PC-3 (cell line): ENCODE measurements at regions of chr6 and their contacts with region 1.

Region 1: DNA sequence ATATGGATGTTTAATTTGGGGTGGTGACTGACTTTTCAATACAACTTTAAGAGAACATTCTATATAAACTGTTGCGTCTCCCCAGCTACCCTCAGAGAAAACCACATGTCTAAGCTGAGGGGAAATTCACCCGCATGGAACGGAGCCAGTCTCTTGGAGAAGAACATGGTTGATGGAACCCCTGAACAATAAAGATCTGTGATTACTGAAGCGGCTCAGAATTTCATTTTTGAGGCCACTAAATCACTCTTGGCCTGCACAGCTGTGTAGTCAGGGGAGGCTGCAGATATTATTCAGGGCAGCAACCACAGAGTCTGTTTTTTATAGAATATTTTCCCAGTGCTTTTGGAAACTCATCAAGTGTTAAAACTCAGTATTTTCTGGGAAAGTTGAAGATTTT is 73.8 kb downstream of the EYA4 start:
- DNase-seq: no peak
- ATAC-seq: no peak
- H3K4me3 ChIP-seq: no peak overlapping the region
- H3K27ac ChIP-seq: no peak overlapping the region
- H3K4me1 ChIP-seq: no peaks in the 10 kb centered on the region
- H3K27me3 ChIP-seq: no peaks in the 10 kb centered on the region
- CTCF ChIP-seq: no peak

Region 2: DNA sequence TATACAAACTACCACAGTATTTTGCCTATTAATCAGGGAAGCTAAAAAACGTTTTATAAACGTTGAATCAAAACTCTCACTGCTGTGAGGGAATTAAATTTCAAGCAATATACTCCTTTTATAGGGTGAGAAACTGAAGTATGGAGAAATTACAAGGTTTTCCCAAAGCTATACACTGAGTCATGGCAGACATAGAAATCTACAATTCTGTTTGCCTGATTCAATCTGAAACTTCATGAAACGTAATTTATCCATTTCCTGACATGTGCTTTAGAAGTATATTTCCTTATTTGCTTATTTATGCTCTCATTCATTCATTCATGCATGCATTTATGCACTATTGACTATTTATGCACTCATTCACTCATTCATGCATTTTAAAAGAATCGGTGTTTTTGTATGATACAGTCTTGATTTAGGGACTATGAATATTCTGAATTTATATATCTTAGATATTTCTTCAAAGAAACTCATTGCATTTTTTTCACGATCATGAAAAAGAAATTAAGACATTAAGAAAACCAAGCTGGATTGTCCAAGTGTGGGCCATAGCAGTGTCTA is 57.3 kb before region 1 on chr6:
- CTCF ChIA-PET with region 1: no interaction called
- POLR2A ChIA-PET with region 1: interaction called, 21 read pairs
- intact Hi-C with region 1: no loop called
- DNase-seq: no peak
- ATAC-seq: no peak
- H3K4me3 ChIP-seq: no peak overlapping the region
- H3K27ac ChIP-seq: no peak overlapping the region
- H3K4me1 ChIP-seq: peaks cover 32% of the 10 kb centered on the region
- H3K27me3 ChIP-seq: no peaks in the 10 kb centered on the region
- CTCF ChIP-seq: no peak

Region 3: DNA sequence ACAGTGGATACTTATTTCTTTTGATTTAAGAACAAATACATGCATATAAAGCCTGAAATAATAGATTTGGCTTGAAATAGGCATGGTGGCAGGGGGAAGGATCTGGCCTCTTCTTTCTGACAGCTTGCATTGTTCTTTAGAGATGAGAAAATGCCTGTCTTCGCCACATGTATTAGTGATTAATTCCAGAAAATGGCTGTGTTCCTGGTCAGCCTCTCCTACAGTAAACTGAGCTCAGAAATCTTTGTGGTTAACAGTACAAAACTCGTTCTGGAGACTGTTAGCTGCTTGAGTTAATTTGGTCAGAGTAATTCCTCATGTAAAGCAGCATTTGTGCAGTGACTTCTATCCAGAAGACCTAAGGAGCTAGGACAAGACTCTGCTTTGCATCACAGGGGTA is 77.7 kb after region 1 on chr6:
- CTCF ChIA-PET with region 1: no interaction called
- POLR2A ChIA-PET with region 1: no interaction called
- intact Hi-C with region 1: no loop called
- DNase-seq: no peak
- ATAC-seq: no peak
- H3K4me3 ChIP-seq: no peak overlapping the region
- H3K27ac ChIP-seq: no peak overlapping the region
- H3K4me1 ChIP-seq: no peaks in the 10 kb centered on the region
- H3K27me3 ChIP-seq: no peaks in the 10 kb centered on the region
- CTCF ChIP-seq: no peak